ENCODE measurements at regions of chr3 and their contacts with region 1.

Region 1: DNA sequence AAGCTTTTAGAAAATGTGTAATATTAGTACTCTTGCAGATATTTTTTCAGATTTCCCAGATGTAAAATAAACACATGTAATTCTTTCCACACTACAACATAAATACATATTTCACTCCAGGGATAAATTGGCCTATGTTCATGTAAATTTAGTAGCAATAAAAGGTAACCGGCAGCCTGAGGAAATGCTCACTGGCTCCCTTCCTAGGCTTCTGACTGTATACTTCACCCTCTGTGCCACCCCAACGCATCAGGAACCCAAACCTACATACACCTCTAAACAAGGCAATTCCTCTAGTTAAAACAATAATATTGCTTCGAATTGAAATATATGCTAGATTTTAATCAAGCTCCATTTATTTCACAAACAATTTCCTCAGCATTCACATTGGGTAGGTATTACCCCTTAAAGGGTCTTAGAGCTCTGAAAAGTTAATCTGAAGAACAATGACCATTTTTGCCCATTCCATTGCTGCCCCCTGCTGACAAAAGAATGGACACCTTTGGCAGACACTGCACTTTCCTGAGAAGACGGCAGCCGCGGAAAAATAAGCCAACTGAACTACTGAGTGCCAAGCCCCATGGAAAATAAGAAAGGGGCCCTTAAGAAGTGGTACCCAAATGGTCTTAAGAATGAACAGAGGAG is 212.5 kb downstream of the OSBPL10 start:
- DNase-seq: no peak
- ATAC-seq: peak; percentile 68

Region 2: GRCh38 chr3:31550452-31551251 is 217.9 kb before region 1 on chr3:
- intact Hi-C with region 1: loop called (anchors 1 kb)
- DNase-seq: no peak
- ATAC-seq: peak; percentile 33

Region 3: GRCh38 chr3:31610700-31611275 is 157.8 kb before region 1 on chr3:
- intact Hi-C with region 1: loop called (anchors 5 kb)
- DNase-seq: no peak
- ATAC-seq: no peak

Region 4: GRCh38 chr3:31724661-31725060 is 43.9 kb before region 1 on chr3:
- intact Hi-C with region 1: loop called (anchors 2 kb)
- DNase-seq: no peak
- ATAC-seq: no peak